ENCODE measurements at regions of chr12 and their contacts with region 1.

Region 1: DNA sequence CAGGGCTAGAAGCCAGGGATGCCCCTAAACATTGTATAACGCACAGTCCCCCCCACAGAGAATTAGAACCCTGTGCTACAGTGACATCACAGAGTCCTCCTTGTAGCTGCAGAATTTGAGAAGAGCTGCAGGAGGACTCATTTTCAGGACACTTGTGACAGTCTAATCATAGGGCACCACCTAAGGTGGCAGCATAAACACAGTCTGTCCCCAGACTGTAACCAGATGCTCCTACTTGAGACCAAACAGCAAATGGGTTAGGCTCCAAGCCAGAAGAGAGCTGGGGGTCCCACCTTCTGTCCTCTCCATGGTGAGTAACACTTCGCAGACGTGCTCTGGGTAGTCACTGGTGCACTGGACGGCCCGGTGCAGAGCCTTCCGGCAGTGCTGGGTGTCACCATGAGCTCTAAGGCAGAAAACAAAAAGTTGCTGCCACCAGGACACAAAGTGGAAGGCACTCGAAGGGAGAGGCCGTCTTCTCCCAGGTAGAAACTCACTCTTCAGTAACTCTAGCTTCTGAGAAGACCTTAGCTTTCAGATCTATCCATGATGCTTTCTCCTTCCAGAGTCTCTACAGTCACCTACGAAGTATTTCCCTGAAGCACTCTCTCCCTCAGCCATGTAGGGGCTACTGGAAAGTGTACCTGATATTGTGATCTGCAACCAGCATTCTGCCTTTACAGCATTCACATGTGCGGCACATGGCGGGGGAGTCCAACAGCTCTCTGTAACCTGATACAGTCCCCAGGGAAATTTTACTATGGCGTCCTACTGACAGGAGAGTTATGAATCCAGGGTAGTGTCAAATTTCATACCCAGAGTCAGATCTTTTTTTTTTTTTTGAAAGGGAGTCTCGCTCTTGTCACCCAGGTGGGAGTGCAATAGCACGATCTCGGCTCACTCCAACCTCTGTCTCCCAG is 17.1 kb downstream of the FICD start:
- DNase-seq: no peak
- ATAC-seq: no peak
- H3K4me3 ChIP-seq: no peak overlapping the region
- H3K4me3 Mint-ChIP-seq: no peak overlapping the region
- H3K27ac ChIP-seq: no peak overlapping the region
- H3K27ac Mint-ChIP-seq: peak overlapping the region in 1 of 2 donors; percentile 48
- H3K4me1 ChIP-seq: no peaks in the 10 kb centered on the region
- H3K4me1 Mint-ChIP-seq: peaks cover 0 to 3% (median 0%) of the 10 kb centered on the region in 3 donors
- H3K27me3 ChIP-seq: no peaks in the 10 kb centered on the region
- H3K27me3 Mint-ChIP-seq: no peaks in the 10 kb centered on the region

Region 2: DNA sequence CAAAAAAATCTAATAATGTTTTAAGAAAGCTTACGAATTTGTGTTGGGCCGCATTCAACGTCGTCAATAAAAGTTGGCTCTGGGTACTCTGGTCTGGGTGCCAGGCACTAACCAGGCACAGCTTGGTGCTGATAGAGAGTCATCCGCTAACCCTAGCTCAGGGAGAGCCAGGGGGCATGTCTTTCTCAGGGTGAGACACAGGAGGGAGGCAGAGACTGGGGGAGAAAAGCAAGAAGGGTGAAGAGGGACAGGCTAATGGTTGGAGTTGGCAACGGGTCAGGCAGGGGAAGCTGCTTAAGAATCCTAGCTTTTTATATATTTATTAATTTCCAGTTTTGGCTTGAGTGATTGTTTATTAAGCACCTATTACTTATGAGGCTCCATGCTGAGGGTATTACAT is 298.0 kb before region 1 on chr12:
- CTCF ChIA-PET with region 1: no interaction called
- POLR2A ChIA-PET with region 1: no interaction called
- DNase-seq: peak in 3 of 35 experiments; percentile 3 to 10 (median 4)
- ATAC-seq: no peak
- H3K4me3 ChIP-seq: no peak overlapping the region
- H3K4me3 Mint-ChIP-seq: no peak overlapping the region
- H3K27ac ChIP-seq: no peak overlapping the region
- H3K27ac Mint-ChIP-seq: no peak overlapping the region
- H3K4me1 ChIP-seq: no peaks in the 10 kb centered on the region
- H3K4me1 Mint-ChIP-seq: no peaks in the 10 kb centered on the region
- H3K27me3 ChIP-seq: peaks cover 0 to 18% of the 10 kb centered on the region in 2 experiments
- H3K27me3 Mint-ChIP-seq: peaks cover 25 to 31% of the 10 kb centered on the region in 2 donors

Region 3: DNA sequence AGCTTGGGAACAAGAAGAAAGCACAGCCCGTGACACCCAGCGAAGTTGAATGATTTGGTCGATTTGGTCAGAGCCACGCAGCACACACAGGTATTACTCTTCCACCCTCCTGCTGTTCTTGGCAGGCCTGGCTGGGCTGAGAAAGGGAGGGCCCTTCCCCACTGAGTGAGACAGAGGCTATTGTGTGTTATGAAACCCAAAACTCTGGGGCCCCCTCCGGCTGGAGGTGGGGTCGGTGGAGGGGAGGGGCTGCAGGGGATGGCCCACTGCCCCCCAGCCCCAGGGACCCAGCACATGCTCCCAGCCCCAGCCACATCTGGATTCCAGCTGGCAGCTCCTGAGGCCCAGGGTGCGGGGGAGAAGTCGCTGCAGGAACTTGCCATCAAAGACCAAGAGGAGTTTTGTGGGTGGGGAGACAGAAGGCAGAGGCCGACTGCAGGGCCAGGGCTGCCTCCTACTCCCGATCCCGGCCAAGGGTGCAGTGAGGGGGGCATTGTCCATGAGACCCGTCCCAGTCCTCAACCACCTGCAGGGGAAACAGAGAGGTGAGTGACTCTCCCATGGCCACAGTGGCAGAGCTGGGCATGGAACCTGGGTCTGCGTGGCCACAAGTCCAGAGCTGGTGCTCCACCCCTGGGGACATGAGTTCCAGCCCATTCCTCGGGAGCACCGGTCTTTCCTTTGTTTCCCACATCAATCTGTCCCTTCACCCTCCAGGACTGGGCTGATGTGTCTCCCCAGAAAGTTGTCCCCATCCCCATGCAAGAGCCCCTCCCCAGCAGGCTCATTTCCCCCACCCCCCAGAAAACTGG is 57.0 kb after region 1 on chr12:
- CTCF ChIA-PET with region 1: no interaction called
- POLR2A ChIA-PET with region 1: no interaction called
- DNase-seq: no peak
- ATAC-seq: no peak
- H3K4me3 ChIP-seq: no peak overlapping the region
- H3K4me3 Mint-ChIP-seq: no peak overlapping the region
- H3K27ac ChIP-seq: no peak overlapping the region
- H3K27ac Mint-ChIP-seq: no peak overlapping the region
- H3K4me1 ChIP-seq: no peaks in the 10 kb centered on the region
- H3K4me1 Mint-ChIP-seq: no peaks in the 10 kb centered on the region
- H3K27me3 ChIP-seq: peaks cover 0 to 23% of the 10 kb centered on the region in 2 experiments
- H3K27me3 Mint-ChIP-seq: no peaks in the 10 kb centered on the region

Region 4: DNA sequence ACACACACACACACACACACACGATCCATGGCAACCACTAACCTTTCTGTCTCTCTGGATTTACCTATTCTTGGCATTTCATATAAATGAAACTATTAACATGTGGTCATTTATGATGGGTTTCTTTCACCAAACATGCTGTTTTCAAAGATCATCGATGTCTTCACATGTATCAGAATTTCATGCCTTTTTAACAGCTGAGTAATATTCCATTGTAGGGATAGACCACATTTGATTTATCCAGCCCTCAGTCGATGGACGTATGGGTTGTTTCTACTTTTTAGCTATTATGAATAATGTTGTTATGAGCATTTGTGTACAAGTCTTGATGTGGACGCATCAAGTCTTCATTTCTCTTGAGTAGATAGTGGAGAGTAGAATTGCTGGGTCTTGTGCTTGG is 1097.9 kb after region 1 on chr12:
- CTCF ChIA-PET with region 1: interaction called in 1 of 2 experiments, 12 read pairs
- POLR2A ChIA-PET with region 1: no interaction called
- DNase-seq: no peak
- ATAC-seq: no peak
- H3K4me3 ChIP-seq: no peak overlapping the region
- H3K4me3 Mint-ChIP-seq: no peak overlapping the region
- H3K27ac ChIP-seq: no peak overlapping the region
- H3K27ac Mint-ChIP-seq: no peak overlapping the region
- H3K4me1 ChIP-seq: no peaks in the 10 kb centered on the region
- H3K4me1 Mint-ChIP-seq: peaks cover 0 to 9% (median 0%) of the 10 kb centered on the region in 3 donors
- H3K27me3 ChIP-seq: peaks cover 0 to 60% of the 10 kb centered on the region in 2 experiments
- H3K27me3 Mint-ChIP-seq: peaks cover 29 to 48% of the 10 kb centered on the region in 2 donors

Measured in T-cell (primary cell).